ENCODE measurements at regions of chr2 and their contacts with region 1.

Region 1: GRCh38 chr2:101419096-101419663 is 31.9 kb upstream of the CREG2 start:
- DNase-seq: no peak
- H3K4me3 ChIP-seq: no peak overlapping the region
- CTCF ChIP-seq: peak; percentile 52

Region 2: GRCh38 chr2:101064868-101065549 is 354.2 kb before region 1 on chr2:
- CTCF ChIA-PET with region 1: no interaction called
- POLR2A ChIA-PET with region 1: no interaction called
- DNase-seq: no peak
- H3K4me3 ChIP-seq: no peak overlapping the region
- CTCF ChIP-seq: no peak

Region 3: DNA sequence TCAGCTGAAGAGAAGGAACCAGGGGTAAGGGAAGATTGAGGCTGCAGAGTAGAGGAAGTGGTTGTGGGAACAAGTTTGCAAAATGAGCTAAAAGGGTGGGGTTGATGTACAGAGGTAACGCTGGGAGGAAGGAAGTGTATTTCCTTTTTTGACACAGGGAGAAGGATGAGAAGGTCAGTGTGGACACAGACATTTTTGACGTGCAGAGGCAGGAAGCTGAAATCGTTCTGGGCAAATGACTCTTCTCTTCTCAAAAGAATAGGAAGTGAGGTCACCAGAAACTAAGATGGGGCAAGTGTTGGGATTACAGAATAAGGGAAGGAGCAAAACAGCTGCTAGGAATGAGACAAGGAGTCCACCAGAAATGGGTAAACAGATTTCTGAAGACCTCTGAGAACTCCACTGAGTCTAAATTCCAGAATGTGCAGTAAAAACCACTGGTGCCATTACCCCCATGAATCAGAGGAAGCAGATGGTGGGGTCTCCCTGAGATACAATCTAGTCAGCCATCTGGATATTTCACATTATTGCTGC is 90.6 kb before region 1 on chr2:
- CTCF ChIA-PET with region 1: no interaction called
- POLR2A ChIA-PET with region 1: no interaction called
- DNase-seq: no peak
- H3K4me3 ChIP-seq: no peak overlapping the region
- CTCF ChIP-seq: no peak

Region 4: GRCh38 chr2:101435001-101435862 is 16.1 kb after region 1 on chr2:
- CTCF ChIA-PET with region 1: interaction called, 25 read pairs
- POLR2A ChIA-PET with region 1: no interaction called
- DNase-seq: no peak
- H3K4me3 ChIP-seq: peak overlapping the region; percentile 39
- CTCF ChIP-seq: no peak

Region 5: DNA sequence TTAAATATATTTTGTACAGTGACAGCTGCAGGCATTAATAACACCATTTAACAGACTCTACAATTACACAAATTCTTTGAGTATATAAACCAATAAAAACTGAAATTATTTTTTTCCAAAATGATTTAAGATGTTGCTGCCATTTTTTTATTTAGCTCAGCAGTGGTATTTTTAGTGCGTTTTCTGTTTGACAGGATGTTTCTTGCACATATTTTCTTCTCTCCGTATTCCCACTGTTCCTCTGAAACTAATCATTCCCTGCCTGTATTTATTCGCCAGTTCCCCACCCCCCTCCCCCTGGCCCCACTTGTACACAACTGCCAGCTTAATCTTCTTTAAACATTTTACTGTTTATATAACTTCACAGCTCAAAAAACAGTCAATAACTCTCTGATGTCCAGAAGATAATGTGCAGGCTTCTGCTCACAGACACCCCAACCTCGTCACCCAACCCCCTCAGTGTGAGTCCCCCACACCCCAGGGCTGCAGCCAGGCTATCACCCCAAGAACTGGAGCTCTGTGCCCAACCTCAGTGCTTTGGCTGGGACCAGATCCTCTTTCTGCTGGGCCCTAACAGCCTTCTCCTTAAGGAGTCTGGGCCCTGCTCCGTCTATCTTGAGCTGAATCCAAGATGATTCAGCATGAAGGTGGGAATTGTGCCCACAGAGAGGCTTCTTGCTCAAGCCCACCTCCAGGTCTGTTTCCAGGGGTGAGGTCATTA is 236.7 kb after region 1 on chr2:
- CTCF ChIA-PET with region 1: no interaction called
- POLR2A ChIA-PET with region 1: no interaction called
- DNase-seq: no peak
- H3K4me3 ChIP-seq: no peak overlapping the region
- CTCF ChIP-seq: no peak

Region 6: DNA sequence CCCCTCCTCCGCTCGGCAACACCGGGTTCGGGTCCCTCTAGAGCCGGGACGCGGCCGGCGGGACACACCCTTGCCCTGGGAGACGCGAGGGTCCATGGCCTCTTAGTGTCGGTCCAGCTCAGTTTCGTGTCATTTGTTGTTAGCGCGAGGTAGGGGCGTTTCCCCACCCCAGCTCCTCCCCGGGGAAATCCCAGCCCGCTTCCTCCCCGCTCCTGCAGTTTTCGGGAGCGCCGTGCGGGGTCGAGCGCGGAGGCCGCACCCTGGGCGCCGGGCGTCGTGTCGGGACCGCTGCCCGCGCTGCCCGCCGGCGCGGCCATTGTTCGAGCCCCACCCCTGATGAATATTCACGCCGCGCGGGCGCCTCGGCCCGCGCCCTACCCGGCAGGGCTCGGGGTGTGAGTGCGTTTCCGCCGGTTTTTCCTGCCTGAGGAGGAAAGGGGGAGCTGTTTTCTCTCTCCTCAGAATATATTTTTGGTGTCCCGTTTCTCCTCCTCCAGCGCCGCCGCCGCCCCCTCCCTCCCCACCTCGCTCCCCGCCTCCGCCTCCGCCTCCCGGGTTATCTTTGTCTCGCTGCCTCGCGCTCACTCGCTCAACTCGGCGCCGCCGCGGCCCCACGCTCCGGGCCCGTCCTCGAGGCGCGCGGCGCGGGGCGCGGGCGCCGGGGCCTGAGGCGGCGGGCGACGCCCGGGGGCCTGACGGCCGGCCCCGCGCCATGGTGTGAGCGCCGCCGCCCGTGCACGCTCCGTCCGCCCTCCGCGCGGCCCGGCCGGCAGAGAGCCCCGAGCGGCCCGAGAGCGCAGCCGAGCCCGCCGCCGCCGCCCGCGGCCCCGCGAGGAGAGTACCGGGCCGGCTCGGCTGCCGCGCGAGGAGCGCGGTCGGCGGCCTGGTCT is 278.2 kb after region 1 on chr2 and contains the start of gene MAP4K4:
- CTCF ChIA-PET with region 1: interaction called, 13 read pairs
- POLR2A ChIA-PET with region 1: interaction called, 5 read pairs
- DNase-seq: peak; percentile 24
- H3K4me3 ChIP-seq: peak within 1 kb of the TSS; percentile 83
- CTCF ChIP-seq: peak; percentile 16

Region 7: GRCh38 chr2:101831351-101831865 is 412.2 kb after region 1 on chr2:
- CTCF ChIA-PET with region 1: interaction called, 123 read pairs
- POLR2A ChIA-PET with region 1: no interaction called
- DNase-seq: no peak
- H3K4me3 ChIP-seq: no peak overlapping the region
- CTCF ChIP-seq: peak; percentile 84

Region 8: DNA sequence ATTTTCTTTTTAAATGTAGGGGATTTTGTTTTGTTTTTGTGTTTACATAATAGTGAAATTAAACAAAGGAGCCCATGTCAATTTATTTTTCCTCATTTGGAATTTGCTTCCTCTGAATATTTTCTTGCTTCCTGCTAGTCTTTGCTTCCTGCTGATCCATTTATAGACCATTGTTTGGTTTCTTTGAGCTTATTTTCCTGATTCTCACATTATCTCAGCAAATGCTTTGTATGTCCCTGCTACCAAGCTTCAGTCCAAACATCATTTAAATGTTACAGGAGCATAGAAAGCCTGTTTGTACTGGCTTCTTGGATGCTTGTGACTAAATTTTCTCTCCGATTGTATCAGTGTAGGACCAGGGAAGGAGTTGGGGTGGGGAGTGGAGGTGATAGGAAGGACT is 445.2 kb after region 1 on chr2:
- CTCF ChIA-PET with region 1: interaction called, 12 read pairs
- POLR2A ChIA-PET with region 1: no interaction called
- DNase-seq: no peak
- H3K4me3 ChIP-seq: no peak overlapping the region
- CTCF ChIP-seq: no peak

Measured in AG04449 (cell line).